CD4-positive, alpha-beta memory T cell (primary cell): ENCODE measurements at regions of chr13 and their contacts with region 1.

Region 1: GRCh38 chr13:52450012-52450792 is at the start of gene VPS36:
- DNase-seq: peak; percentile 89 to 94 (median 94)
- H3K4me3 ChIP-seq: peak within 1 kb of the TSS; percentile 53 to 95
- H3K4me3 Mint-ChIP-seq: peak within 1 kb of the TSS; percentile 90 to 98 (median 94)
- H3K27ac ChIP-seq: peak within 1 kb of the TSS; percentile 82
- H3K27ac Mint-ChIP-seq: peak within 1 kb of the TSS; percentile 84 to 95 (median 92)
- H3K4me1 ChIP-seq: peaks cover 38% of the 10 kb centered on the region
- H3K4me1 Mint-ChIP-seq: peaks cover 22 to 55% (median 36%) of the 10 kb centered on the region in 4 donors
- H3K27me3 ChIP-seq: no peaks in the 10 kb centered on the region
- H3K27me3 Mint-ChIP-seq: no peaks in the 10 kb centered on the region
- total RNA-seq, gene VPS36: 59.9 to 64.5 TPM

Region 2: GRCh38 chr13:51803422-51804294 is 646.5 kb before region 1 on chr13 and contains the start of gene DHRS12:
- CTCF ChIA-PET with region 1: no interaction called
- POLR2A ChIA-PET with region 1: no interaction called
- intact Hi-C with region 1: loop called (anchors 1 kb)
- DNase-seq: peak; percentile 92 to 96 (median 95)
- H3K4me3 ChIP-seq: peak within 1 kb of the TSS; percentile 76 to 88
- H3K4me3 Mint-ChIP-seq: peak within 1 kb of the TSS; percentile 91 to 98 (median 96)
- H3K27ac ChIP-seq: peak within 1 kb of the TSS; percentile 96
- H3K27ac Mint-ChIP-seq: peak within 1 kb of the TSS; percentile 98 to 100 (median 100)
- H3K4me1 ChIP-seq: peaks cover 45% of the 10 kb centered on the region
- H3K4me1 Mint-ChIP-seq: peaks cover 34 to 59% (median 47%) of the 10 kb centered on the region in 4 donors
- H3K27me3 ChIP-seq: no peaks in the 10 kb centered on the region
- H3K27me3 Mint-ChIP-seq: no peaks in the 10 kb centered on the region
- total RNA-seq, gene DHRS12: 23.6 to 24.3 TPM

Region 3: DNA sequence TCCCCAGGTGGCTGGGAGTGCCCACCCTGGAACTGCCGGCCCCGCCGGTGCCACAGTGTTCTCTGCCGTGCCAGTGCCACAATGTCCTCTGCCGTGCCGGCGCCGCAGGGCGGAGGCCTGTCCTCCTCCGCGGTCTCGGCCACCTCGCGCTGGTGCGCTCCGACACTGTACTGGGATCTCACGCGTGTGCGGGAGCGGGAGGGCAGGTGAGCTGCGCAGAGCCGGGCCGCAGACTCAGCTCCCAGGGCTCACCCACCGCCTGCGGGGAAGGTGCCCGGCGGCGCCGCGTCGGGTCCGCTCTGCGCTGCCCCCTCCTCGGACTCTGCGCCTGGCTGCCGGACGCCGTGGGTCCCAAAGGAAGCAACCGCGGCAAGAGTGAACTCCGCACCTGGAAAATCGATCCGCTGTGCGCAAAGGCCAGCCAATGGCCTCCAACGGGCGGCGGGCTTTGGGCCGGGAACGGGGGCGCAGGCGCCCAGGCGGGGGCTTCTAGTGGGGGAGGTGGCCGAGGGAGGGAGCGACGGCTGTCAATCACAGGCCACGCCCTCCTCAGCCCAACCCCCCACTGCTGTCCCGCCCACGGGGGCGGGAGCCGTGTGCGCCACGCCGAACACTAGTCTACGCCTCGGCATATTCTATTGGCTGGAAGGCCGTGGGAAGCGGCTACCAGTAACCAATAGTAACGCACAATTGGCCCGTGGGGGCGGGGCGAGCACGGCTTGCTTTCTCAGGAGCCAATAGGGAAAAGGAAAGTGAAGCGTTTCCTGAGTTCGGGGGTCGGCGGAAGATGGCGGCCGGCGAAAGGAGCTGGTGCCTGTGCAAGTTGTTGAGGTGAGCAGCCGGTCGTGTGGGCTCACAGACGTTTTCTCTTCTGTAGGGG is 438.3 kb before region 1 on chr13 and contains the start of gene ALG11:
- CTCF ChIA-PET with region 1: interaction called, 8 read pairs
- POLR2A ChIA-PET with region 1: no interaction called
- intact Hi-C with region 1: loop called (anchors 1 kb)
- DNase-seq: peak; percentile 99
- H3K4me3 ChIP-seq: peak within 1 kb of the TSS; percentile 71 to 92
- H3K4me3 Mint-ChIP-seq: peak within 1 kb of the TSS; percentile 96 to 100 (median 100)
- H3K27ac ChIP-seq: peak within 1 kb of the TSS; percentile 52
- H3K27ac Mint-ChIP-seq: peak within 1 kb of the TSS; percentile 87 to 98 (median 97)
- H3K4me1 ChIP-seq: peaks cover 22% of the 10 kb centered on the region
- H3K4me1 Mint-ChIP-seq: peaks cover 14 to 44% (median 23%) of the 10 kb centered on the region in 4 donors
- H3K27me3 ChIP-seq: peaks cover 8% of the 10 kb centered on the region
- H3K27me3 Mint-ChIP-seq: peaks cover 4 to 24% of the 10 kb centered on the region in 2 donors
- total RNA-seq, gene ALG11: 37.2 to 42.2 TPM

Region 4: GRCh38 chr13:52348071-52348470 is 102.1 kb before region 1 on chr13:
- CTCF ChIA-PET with region 1: no interaction called
- POLR2A ChIA-PET with region 1: no interaction called
- intact Hi-C with region 1: loop called (anchors 1 kb)
- DNase-seq: no peak
- H3K4me3 ChIP-seq: no peak overlapping the region
- H3K4me3 Mint-ChIP-seq: no peak overlapping the region
- H3K27ac ChIP-seq: no peak overlapping the region
- H3K27ac Mint-ChIP-seq: no peak overlapping the region
- H3K4me1 ChIP-seq: no peaks in the 10 kb centered on the region
- H3K4me1 Mint-ChIP-seq: no peaks in the 10 kb centered on the region
- H3K27me3 ChIP-seq: no peaks in the 10 kb centered on the region
- H3K27me3 Mint-ChIP-seq: peaks cover 4 to 12% of the 10 kb centered on the region in 2 donors

Region 5: GRCh38 chr13:52617070-52618060 is 167.2 kb after region 1 on chr13:
- CTCF ChIA-PET with region 1: interaction called, 15 read pairs
- POLR2A ChIA-PET with region 1: interaction called, 12 read pairs
- intact Hi-C with region 1: loop called (anchors 1 kb)
- DNase-seq: peak; percentile 82 to 86 (median 84)
- H3K4me3 ChIP-seq: peak overlapping the region; percentile 57 to 67
- H3K4me3 Mint-ChIP-seq: peak overlapping the region; percentile 98 to 99 (median 99)
- H3K27ac ChIP-seq: peak overlapping the region; percentile 58
- H3K27ac Mint-ChIP-seq: peak overlapping the region; percentile 86 to 98 (median 97)
- H3K4me1 ChIP-seq: peaks cover 30% of the 10 kb centered on the region
- H3K4me1 Mint-ChIP-seq: peaks cover 20 to 55% (median 38%) of the 10 kb centered on the region in 4 donors
- H3K27me3 ChIP-seq: no peaks in the 10 kb centered on the region
- H3K27me3 Mint-ChIP-seq: no peaks in the 10 kb centered on the region